Common myeloid progenitor, CD34-positive (primary cell): ENCODE measurements at regions of chr9 and their contacts with region 1.

Region 1: GRCh38 chr9:4386819-4387218 is 87.0 kb upstream of the GLIS3 start:
- DNase-seq: no peak
- H3K4me3 ChIP-seq: no peak overlapping the region
- H3K27ac ChIP-seq: no peak overlapping the region
- H3K4me1 ChIP-seq: no peaks in the 10 kb centered on the region
- H3K27me3 ChIP-seq: peaks cover 0 to 9% (median 3%) of the 10 kb centered on the region in 5 experiments

Region 2: GRCh38 chr9:4640027-4640426 is 253.2 kb after region 1 on chr9:
- CTCF ChIA-PET with region 1: interaction called, 11 read pairs
- POLR2A ChIA-PET with region 1: no interaction called
- DNase-seq: peak in 2 of 3 donors; percentile 49 to 67
- H3K4me3 ChIP-seq: no peak overlapping the region
- H3K27ac ChIP-seq: no peak overlapping the region
- H3K4me1 ChIP-seq: no peaks in the 10 kb centered on the region
- H3K27me3 ChIP-seq: peaks cover 0 to 54% (median 4%) of the 10 kb centered on the region in 5 experiments